Aorta (tissue), 5 donors: ENCODE measurements at regions of chr7 and their contacts with region 1.

Region 1: GRCh38 chr7:116815041-116815440 is 47.3 kb upstream of the CAPZA2 start:
- DNase-seq: no peak
- ATAC-seq: no peak
- H3K4me3 ChIP-seq: no peak overlapping the region
- H3K27ac ChIP-seq: no peak overlapping the region
- H3K4me1 ChIP-seq: no peaks in the 10 kb centered on the region
- H3K27me3 ChIP-seq: no peaks in the 10 kb centered on the region

Region 2: GRCh38 chr7:116173051-116174028 is 641.7 kb before region 1 on chr7:
- intact Hi-C with region 1: loop called in 1 of 2 experiments (anchors 5 kb)
- DNase-seq: no peak
- ATAC-seq: peak; percentile 65
- H3K4me3 ChIP-seq: no peak overlapping the region
- H3K27ac ChIP-seq: no peak overlapping the region
- H3K4me1 ChIP-seq: peaks cover 0 to 6% of the 10 kb centered on the region in 2 donors
- H3K27me3 ChIP-seq: no peaks in the 10 kb centered on the region

Region 3: DNA sequence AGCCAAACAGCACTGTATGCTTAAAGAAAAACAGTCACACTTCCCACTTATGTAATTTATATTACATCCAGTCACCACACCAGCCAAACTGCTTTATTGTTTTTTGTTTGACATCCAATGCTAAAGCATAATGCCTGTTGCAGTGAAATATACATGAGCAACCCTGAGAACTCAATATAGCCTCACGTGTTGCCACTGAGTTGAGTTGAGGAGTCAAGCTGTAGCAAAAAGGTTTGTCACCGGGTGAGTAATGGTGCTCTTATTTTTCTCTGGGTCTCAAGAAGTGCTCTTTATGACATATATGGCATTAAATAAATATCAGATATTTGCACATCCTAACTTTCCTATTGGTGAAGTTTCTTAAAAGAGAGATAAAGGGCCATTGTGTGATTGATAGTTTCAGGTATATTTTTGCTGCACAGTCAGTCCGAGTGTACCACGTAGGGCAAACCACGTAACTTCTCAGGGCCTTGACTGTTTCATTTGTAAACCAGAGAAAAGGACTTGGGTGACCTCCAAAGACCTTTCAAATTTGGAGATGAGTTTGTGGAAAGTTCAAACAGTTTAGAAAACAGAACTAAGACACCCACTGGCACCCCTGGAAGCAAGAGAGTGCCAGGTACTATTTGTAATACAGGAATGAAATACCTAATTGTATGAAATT is 833.3 kb after region 1 on chr7:
- intact Hi-C with region 1: no loop called
- DNase-seq: no peak
- ATAC-seq: no peak
- H3K4me3 ChIP-seq: no peak overlapping the region
- H3K27ac ChIP-seq: no peak overlapping the region
- H3K4me1 ChIP-seq: no peaks in the 10 kb centered on the region
- H3K27me3 ChIP-seq: no peaks in the 10 kb centered on the region